Endothelial cell of umbilical vein (primary cell): ENCODE measurements at regions of chr9 and their contacts with region 1.

Region 1: GRCh38 chr9:124126571-124127289 is 115.2 kb downstream of the LHX2 start:
- DNase-seq: peak; percentile 67
- H3K4me3 ChIP-seq: no peak overlapping the region
- H3K27ac ChIP-seq: no peak overlapping the region
- H3K4me1 ChIP-seq: no peaks in the 10 kb centered on the region
- H3K27me3 ChIP-seq: no peaks in the 10 kb centered on the region
- CTCF ChIP-seq: peak; percentile 90 to 96
- POLR2A ChIP-seq: no peak

Region 2: DNA sequence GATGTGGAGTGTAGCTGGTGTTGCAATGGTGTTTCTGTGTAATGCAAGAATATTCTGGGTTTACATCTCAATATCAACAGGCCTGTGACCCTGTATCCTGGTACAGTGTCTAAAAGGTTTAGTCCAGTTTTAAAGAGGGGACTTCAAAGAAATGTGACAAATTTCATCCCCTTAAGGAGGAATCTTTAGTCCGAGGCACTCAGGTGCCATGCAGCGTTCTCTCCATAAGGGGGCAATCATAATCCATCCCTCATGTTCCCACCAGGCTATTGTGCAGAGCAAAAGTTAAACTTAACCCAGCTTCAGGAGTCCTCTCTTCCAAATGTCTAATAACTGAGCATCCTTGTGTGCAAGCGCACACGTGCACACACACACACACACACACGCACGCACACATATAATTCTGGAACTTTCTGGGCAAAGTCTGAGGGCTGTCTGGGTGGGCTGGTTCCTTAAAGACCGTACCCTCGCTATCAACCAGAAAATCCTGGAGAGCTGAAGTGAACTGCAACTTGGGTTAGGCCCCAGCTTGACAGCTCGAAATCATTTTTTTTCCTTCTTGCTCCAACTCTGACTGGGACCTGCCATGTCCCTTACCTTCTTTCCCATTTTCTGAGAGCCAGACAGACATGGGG is 724.7 kb before region 1 on chr9:
- CTCF ChIA-PET with region 1: no interaction called
- POLR2A ChIA-PET with region 1: no interaction called
- dilution Hi-C with region 1: no loop called
- intact Hi-C with region 1: loop called (anchors 5 kb)
- DNase-seq: peak; percentile 64
- H3K4me3 ChIP-seq: no peak overlapping the region
- H3K27ac ChIP-seq: no peak overlapping the region
- H3K4me1 ChIP-seq: no peaks in the 10 kb centered on the region
- H3K27me3 ChIP-seq: no peaks in the 10 kb centered on the region
- CTCF ChIP-seq: peak; percentile 75 to 78
- POLR2A ChIP-seq: no peak

Region 3: DNA sequence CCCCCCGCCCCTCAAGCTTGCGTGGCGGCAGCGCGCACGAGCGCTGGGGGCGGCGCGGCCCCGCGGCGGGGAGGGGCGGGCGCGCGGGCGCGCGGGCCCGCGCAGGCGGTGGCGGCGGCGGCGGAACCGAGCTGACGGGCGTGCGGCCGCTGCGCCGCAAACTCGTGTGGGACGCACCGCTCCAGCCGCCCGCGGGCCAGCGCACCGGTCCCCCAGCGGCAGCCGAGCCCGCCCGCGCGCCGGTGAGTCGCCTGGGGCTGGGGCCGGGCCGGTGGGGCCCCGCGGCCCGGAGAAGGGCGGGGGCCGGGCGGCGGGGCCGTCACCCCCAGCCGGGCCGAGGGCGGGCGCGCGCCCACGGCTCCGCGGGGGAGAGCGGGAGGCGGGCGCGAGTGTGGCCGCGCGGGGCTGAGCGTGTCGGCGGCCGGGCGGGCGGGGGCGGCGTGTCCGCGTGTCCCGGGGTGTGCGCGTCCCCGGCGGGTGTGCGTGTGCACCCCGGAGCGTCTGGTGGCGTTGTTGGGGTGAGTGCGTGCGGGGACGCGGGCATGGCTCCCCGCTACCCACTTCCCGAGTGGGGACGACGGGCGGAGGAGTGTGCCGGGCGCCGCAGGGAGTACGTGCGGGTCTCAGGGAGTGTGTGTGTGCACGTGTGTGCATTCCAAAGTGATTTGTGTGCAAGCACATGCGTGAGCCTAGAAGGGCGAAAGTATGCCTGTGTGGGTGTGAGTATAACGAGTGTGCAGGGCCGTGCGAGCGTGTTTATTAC is 131.3 kb after region 1 on chr9 and contains the start of gene NEK6:
- CTCF ChIA-PET with region 1: interaction called, 18 read pairs
- POLR2A ChIA-PET with region 1: no interaction called
- dilution Hi-C with region 1: no loop called
- intact Hi-C with region 1: no loop called
- DNase-seq: peak; percentile 32
- H3K4me3 ChIP-seq: peak within 1 kb of the TSS; percentile 4 to 90 (median 70)
- H3K27ac ChIP-seq: peak within 1 kb of the TSS; percentile 76
- H3K4me1 ChIP-seq: peaks cover 38% of the 10 kb centered on the region
- H3K27me3 ChIP-seq: no peaks in the 10 kb centered on the region
- CTCF ChIP-seq: no peak
- POLR2A ChIP-seq: no peak
- total RNA-seq, gene NEK6: 65.9 and 67.1 TPM in 2 replicates

Region 4: DNA sequence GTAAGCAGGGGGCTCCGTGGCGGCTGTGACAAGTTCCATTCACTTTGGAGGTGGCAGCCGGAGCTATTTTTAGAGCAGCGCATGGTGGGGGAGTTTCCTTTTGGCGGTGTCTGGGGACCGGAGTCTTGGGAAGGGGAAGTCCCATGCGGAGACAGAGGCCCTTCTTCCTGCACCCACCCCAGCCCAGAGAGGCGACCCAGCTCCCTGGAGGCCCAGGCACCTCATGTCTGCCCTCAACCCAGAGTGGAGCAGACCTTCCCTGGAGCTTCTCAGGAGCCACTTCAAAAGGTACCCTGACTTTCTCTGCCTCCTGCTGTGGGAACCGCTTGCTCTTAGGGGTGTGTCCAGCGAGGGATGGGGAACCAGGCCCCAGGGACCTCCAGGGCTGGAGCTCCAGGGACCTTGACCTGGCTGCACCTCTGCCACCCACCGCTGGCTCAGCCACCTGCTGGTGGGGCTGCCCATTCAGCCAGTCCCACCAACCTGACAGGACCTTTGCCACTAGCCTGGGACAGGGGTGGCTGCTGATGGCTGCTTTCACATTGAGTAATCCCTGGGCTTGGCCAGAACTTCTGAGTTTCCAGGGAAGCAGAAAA is 165.2 kb after region 1 on chr9:
- CTCF ChIA-PET with region 1: interaction called, 18 read pairs
- POLR2A ChIA-PET with region 1: no interaction called
- dilution Hi-C with region 1: no loop called
- intact Hi-C with region 1: no loop called
- DNase-seq: no peak
- H3K4me3 ChIP-seq: no peak overlapping the region
- H3K27ac ChIP-seq: peak overlapping the region; percentile 2
- H3K4me1 ChIP-seq: peaks cover 47% of the 10 kb centered on the region
- H3K27me3 ChIP-seq: no peaks in the 10 kb centered on the region
- CTCF ChIP-seq: no peak
- POLR2A ChIP-seq: no peak

Region 5: GRCh38 chr9:124320062-124320973 is 193.6 kb after region 1 on chr9:
- CTCF ChIA-PET with region 1: interaction called, 41 read pairs
- POLR2A ChIA-PET with region 1: no interaction called
- dilution Hi-C with region 1: no loop called
- intact Hi-C with region 1: loop called (anchors 1 kb)
- DNase-seq: peak; percentile 45
- H3K4me3 ChIP-seq: no peak overlapping the region
- H3K27ac ChIP-seq: no peak overlapping the region
- H3K4me1 ChIP-seq: peaks cover 9% of the 10 kb centered on the region
- H3K27me3 ChIP-seq: no peaks in the 10 kb centered on the region
- CTCF ChIP-seq: peak; percentile 91 to 92
- POLR2A ChIP-seq: no peak

Region 6: DNA sequence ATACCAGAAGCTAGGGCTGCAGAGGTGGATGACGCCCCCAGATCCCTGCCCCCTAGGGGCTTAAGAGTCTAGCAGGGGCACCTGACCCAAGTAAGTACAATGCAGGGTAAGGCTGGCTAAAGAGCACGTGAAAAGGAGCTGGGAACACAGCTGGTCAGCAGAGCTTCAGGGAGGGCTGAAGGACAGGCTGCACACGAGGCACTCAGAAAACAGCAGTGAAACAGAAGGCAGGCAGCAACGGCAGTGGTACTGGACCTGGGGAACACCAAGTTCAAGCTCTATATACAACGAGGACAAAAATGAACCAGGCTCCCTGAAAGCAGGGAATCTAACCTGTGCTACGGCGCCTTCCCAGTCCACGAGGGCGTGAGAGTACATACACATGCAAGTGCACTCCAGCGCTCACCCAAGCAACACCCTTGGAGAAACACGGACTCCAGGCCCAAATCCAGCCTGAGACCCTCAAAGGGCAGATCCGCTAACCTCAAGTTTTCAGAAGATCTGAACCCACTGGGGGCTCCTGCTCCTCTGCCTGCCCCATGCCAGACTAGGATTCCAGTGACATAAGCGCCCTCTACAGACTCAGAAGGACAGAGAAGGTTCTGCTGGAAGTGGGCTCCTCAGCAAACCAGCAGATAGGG is 231.1 kb after region 1 on chr9:
- CTCF ChIA-PET with region 1: interaction called, 8 read pairs
- POLR2A ChIA-PET with region 1: no interaction called
- dilution Hi-C with region 1: no loop called
- intact Hi-C with region 1: loop called (anchors 1 kb)
- DNase-seq: no peak
- H3K4me3 ChIP-seq: no peak overlapping the region
- H3K27ac ChIP-seq: no peak overlapping the region
- H3K4me1 ChIP-seq: no peaks in the 10 kb centered on the region
- H3K27me3 ChIP-seq: no peaks in the 10 kb centered on the region
- CTCF ChIP-seq: peak in 1 of 2 donors; percentile 19
- POLR2A ChIP-seq: peak; percentile 34

Region 7: GRCh38 chr9:124537926-124538325 is 411.2 kb after region 1 on chr9:
- CTCF ChIA-PET with region 1: interaction called, 16 read pairs
- POLR2A ChIA-PET with region 1: no interaction called
- dilution Hi-C with region 1: no loop called
- intact Hi-C with region 1: no loop called
- DNase-seq: no peak
- H3K4me3 ChIP-seq: no peak overlapping the region
- H3K27ac ChIP-seq: no peak overlapping the region
- H3K4me1 ChIP-seq: no peaks in the 10 kb centered on the region
- H3K27me3 ChIP-seq: peaks cover 5 to 12% of the 10 kb centered on the region in 2 experiments
- CTCF ChIP-seq: no peak
- POLR2A ChIP-seq: no peak